Activated naive CD4-positive, alpha-beta T cell treated with anti-CD3 and anti-CD28 coated beads for 36 hours (primary cell): ENCODE measurements at regions of chrX and their contacts with region 1.

Region 1: DNA sequence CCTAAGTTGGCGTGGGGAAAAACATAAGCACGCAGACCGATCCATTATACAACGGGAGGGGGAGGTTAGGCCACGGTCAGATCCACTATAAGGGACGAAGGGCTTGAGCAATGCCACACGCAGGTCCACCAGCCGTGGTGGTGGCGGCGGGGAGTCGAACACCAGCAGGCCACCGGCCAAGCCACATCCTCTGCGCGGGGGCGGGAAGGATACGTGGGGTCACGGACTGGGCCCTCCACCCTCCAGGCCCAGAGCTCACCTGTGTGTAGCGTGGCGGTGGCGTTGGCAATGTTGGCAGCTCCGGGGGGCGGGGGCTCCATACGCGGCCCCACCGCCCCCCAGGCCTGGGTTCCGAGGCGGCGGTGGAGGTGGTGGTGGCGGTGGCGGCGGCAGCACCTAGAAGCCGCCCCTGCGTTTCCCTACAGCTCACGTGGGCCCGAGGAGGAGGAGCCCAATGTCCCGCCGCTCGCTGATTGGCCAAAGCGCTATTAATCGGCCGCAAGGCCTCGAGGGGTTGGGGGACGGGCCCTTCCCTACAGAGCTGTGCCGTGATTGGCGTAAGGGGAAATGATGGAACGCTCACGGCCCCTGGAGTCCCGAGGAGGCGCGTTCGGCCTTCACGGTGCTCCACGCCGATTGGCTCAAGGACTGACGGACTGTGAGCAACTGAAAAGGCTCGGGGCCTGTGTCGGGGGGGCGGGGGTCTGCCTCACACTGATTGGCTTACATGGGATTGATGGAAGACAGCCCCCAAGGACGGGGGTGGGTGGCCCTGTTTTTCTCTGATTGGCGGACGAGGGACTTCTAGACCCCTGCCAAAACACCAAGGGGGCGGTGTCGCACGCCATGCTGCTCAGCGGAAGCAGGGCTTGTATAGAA is at the start of gene ELK1:
- DNase-seq: peak; percentile 93
- H3K4me3 Mint-ChIP-seq: peak within 1 kb of the TSS; percentile 88
- H3K27ac Mint-ChIP-seq: peak within 1 kb of the TSS; percentile 91
- H3K4me1 Mint-ChIP-seq: peaks cover 37% of the 10 kb centered on the region
- H3K27me3 Mint-ChIP-seq: no peaks in the 10 kb centered on the region
- total RNA-seq, gene ELK1: 58.1 to 58.8 TPM

Region 2: DNA sequence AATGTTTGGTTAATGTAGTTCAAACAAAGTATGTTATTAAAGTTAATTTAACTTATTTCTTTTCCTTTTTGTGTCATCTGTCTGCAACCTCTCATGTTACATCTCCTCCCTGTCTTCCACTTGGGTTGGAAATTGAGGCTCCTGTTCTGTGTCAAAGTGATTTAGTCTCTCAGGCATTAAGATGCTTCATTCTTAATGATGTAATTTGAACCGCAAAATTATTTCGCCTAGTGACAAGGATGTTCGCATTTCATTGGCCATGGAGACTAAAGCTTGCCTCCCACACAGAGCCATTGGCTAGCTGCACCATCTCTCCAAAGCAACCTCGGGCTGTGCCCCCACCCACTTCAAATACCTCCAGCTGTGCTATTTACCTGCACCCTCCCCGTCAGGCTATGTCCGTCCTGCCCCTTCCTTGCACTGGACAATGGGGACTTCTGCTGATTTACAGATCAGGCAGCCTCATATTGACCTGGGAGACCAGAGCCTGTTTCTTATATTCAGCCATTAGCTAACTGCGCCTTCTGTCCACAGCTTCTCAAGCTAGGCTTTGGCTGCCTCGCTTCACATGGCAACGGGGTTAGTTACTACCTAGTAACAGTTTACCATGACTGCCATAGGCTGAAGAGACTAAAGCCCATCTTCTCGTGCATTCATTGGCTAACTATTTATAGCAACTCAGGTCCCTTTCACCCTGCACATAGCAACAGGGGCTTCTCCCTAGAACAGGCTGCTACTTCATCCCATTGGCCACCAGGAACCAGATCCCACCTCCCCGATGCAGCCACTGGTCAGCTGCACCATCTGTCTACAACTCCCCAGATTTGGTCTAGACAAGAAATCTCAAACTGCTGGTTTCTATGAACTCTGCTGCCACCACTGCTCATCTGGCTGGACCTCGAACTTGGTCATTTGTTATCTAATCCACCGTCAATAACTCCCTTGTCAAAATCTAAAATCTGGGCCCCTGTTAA is 288.6 kb before region 1 on chrX:
- CTCF ChIA-PET with region 1: no interaction called
- intact Hi-C with region 1: loop called (anchors 10 kb)
- DNase-seq: peak; percentile 18
- H3K4me3 Mint-ChIP-seq: no peak overlapping the region
- H3K27ac Mint-ChIP-seq: no peak overlapping the region
- H3K4me1 Mint-ChIP-seq: peaks cover 20% of the 10 kb centered on the region
- H3K27me3 Mint-ChIP-seq: no peaks in the 10 kb centered on the region

Region 3: DNA sequence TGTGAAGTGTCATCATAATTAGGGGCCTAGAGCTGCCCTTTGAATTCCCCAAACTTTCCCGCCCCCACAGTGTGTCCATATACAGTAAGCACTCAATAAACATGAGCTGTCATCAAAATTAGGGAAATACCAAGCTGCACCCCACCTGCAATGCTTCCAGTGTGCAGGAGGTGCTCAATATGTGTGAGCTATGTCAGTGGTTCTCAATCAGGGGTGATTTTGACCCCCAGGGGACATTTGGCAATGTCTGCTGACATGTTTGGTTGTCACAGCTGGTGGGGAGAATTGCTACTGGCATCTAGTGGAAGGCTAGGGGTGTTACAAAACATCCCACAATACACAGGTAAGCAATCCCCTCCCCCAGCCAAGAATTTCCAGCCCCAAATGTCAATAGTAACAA is 21.4 kb before region 1 on chrX:
- CTCF ChIA-PET with region 1: interaction called, 4 read pairs
- intact Hi-C with region 1: loop called (anchors 1 kb)
- DNase-seq: peak; percentile 41
- H3K4me3 Mint-ChIP-seq: peak overlapping the region; percentile 67
- H3K27ac Mint-ChIP-seq: peak overlapping the region; percentile 89
- H3K4me1 Mint-ChIP-seq: peaks cover 25% of the 10 kb centered on the region
- H3K27me3 Mint-ChIP-seq: no peaks in the 10 kb centered on the region

Region 4: DNA sequence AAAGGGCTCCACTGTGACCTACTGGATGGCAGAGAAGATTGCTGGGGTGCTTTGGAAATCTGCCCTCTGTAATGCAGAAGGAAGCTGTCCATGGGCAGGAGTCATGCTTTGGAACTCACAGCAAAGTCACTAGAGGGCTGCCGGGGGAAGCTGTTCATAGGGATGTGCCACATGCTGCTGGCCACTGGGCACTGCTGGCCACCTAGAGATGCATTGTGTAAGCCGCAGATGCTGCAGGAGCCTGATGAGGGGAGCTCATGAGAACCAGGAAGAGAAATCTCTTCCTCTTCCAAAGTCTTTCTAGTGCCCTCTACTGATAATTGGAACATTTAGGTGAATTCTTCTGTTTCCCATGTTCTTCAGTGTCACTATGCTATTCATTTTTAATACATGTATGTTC is 39.8 kb after region 1 on chrX:
- CTCF ChIA-PET with region 1: no interaction called
- intact Hi-C with region 1: no loop called
- DNase-seq: no peak
- H3K4me3 Mint-ChIP-seq: no peak overlapping the region
- H3K27ac Mint-ChIP-seq: no peak overlapping the region
- H3K4me1 Mint-ChIP-seq: no peaks in the 10 kb centered on the region
- H3K27me3 Mint-ChIP-seq: no peaks in the 10 kb centered on the region

Region 5: GRCh38 chrX:48003758-48004457 is 353.5 kb after region 1 on chrX and contains the start of gene ZNF182:
- CTCF ChIA-PET with region 1: no interaction called
- intact Hi-C with region 1: no loop called
- DNase-seq: peak; percentile 93
- H3K4me3 Mint-ChIP-seq: peak within 1 kb of the TSS; percentile 99
- H3K27ac Mint-ChIP-seq: peak within 1 kb of the TSS; percentile 99
- H3K4me1 Mint-ChIP-seq: peaks cover 22% of the 10 kb centered on the region
- H3K27me3 Mint-ChIP-seq: no peaks in the 10 kb centered on the region
- total RNA-seq, gene ZNF182: 8.2 to 9.3 TPM